CD14-positive monocyte (primary cell): ENCODE measurements at regions of chr1 and their contacts with region 1.

Region 1: DNA sequence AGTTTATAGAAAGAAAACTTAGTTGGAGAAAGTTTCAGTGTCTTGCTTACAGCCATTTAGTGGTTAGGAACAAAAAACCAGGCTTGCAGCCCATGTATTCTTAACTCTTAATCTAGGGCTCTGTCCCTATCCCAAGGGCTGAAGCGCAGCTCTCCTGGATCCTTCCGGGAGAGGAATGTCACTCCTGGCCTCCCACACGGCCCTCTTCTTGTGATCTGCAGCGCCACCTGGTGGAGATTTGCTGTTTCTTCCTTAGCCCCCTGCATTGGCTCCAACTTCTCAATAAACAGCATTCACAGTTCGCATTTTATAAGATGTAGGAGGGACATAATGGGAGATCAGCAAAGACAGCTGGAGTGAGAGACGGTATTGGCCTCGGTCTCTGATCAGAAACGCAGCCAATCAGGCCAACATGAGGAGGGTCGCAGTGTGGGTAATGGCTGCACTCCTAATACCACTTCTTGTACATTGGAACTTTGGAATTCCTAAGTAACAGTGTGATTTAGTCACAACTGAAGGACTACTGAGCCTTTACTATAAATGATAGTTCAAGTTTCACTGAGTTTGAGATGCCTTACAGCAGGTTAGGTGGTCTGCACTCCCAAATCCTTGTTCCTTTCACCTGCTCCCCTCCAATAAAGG is 283.4 kb downstream of the ASTN1 start:
- DNase-seq: peak; percentile 3 to 31 (median 11)
- H3K4me3 ChIP-seq: no peak overlapping the region
- H3K4me3 Mint-ChIP-seq: no peak overlapping the region
- H3K27ac ChIP-seq: no peak overlapping the region
- H3K27ac Mint-ChIP-seq: peak overlapping the region in 1 of 7 donors; percentile 62
- H3K4me1 ChIP-seq: no peaks in the 10 kb centered on the region
- H3K4me1 Mint-ChIP-seq: no peaks in the 10 kb centered on the region
- H3K27me3 ChIP-seq: no peaks in the 10 kb centered on the region
- H3K27me3 Mint-ChIP-seq: peaks cover 1 to 2% (median 2%) of the 10 kb centered on the region in 3 donors
- CTCF ChIP-seq: peak; percentile 91

Region 2: GRCh38 chr1:176374967-176375569 is 506.0 kb before region 1 on chr1:
- intact Hi-C with region 1: loop called in 1 of 2 experiments (anchors 10 kb)
- DNase-seq: peak; percentile 8 to 30 (median 25)
- H3K4me3 ChIP-seq: no peak overlapping the region
- H3K4me3 Mint-ChIP-seq: no peak overlapping the region
- H3K27ac ChIP-seq: no peak overlapping the region
- H3K27ac Mint-ChIP-seq: no peak overlapping the region
- H3K4me1 ChIP-seq: no peaks in the 10 kb centered on the region
- H3K4me1 Mint-ChIP-seq: no peaks in the 10 kb centered on the region
- H3K27me3 ChIP-seq: no peaks in the 10 kb centered on the region
- H3K27me3 Mint-ChIP-seq: peaks cover 0 to 5% (median 2%) of the 10 kb centered on the region in 3 donors
- CTCF ChIP-seq: peak; percentile 88

Region 3: GRCh38 chr1:176559878-176560277 is 321.2 kb before region 1 on chr1:
- intact Hi-C with region 1: loop called in 1 of 2 experiments (anchors 5 kb)
- DNase-seq: peak in 2 of 3 donors; percentile 0 to 6
- H3K4me3 ChIP-seq: no peak overlapping the region
- H3K4me3 Mint-ChIP-seq: no peak overlapping the region
- H3K27ac ChIP-seq: no peak overlapping the region
- H3K27ac Mint-ChIP-seq: no peak overlapping the region
- H3K4me1 ChIP-seq: no peaks in the 10 kb centered on the region
- H3K4me1 Mint-ChIP-seq: no peaks in the 10 kb centered on the region
- H3K27me3 ChIP-seq: no peaks in the 10 kb centered on the region
- H3K27me3 Mint-ChIP-seq: peaks cover 0 to 6% (median 3%) of the 10 kb centered on the region in 3 donors
- CTCF ChIP-seq: peak; percentile 66

Region 4: GRCh38 chr1:176701151-176701866 is 179.8 kb before region 1 on chr1:
- intact Hi-C with region 1: no loop called
- DNase-seq: no peak
- H3K4me3 ChIP-seq: no peak overlapping the region
- H3K4me3 Mint-ChIP-seq: no peak overlapping the region
- H3K27ac ChIP-seq: no peak overlapping the region
- H3K27ac Mint-ChIP-seq: no peak overlapping the region
- H3K4me1 ChIP-seq: no peaks in the 10 kb centered on the region
- H3K4me1 Mint-ChIP-seq: no peaks in the 10 kb centered on the region
- H3K27me3 ChIP-seq: no peaks in the 10 kb centered on the region
- H3K27me3 Mint-ChIP-seq: peaks cover 1 to 2% (median 2%) of the 10 kb centered on the region in 3 donors
- CTCF ChIP-seq: no peak

Region 5: DNA sequence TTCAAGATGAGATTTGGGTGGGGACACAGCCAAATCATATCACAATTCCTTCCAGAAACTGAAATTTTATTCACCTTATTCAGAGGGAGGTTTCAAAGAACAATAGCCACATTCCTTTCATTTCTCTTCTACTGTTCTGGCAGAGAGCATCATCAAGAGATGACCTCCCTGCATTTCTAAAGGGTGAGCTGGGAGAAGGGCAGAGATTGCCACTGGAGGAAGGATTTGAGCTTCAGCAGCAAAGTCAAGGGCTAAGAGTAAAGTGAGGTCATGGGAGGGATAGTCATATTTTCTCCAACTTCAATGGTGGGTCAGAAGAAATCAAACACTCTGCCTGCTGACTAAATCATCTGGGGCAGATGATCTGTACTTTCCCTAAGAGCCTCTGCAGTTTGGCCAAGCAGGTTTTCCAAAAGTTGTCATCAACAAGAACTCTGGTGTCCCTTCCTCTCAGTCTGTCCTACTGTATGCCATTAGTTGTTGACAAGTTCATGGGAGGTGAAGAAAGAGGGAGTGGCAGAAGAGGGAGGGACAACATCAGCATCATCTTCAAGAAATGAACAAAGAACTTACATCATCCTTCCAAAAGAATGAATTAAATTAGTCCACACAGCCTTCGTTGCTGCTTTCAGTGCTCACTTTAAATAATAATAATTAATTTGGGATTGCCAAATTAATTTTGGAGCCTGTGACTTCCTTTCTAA is 14.9 kb before region 1 on chr1:
- intact Hi-C with region 1: no loop called
- DNase-seq: no peak
- H3K4me3 ChIP-seq: no peak overlapping the region
- H3K4me3 Mint-ChIP-seq: no peak overlapping the region
- H3K27ac ChIP-seq: no peak overlapping the region
- H3K27ac Mint-ChIP-seq: no peak overlapping the region
- H3K4me1 ChIP-seq: no peaks in the 10 kb centered on the region
- H3K4me1 Mint-ChIP-seq: no peaks in the 10 kb centered on the region
- H3K27me3 ChIP-seq: no peaks in the 10 kb centered on the region
- H3K27me3 Mint-ChIP-seq: peaks cover 0 to 2% (median 0%) of the 10 kb centered on the region in 3 donors
- CTCF ChIP-seq: no peak

Region 6: GRCh38 chr1:176996456-176997090 is 115.5 kb after region 1 on chr1:
- intact Hi-C with region 1: no loop called
- DNase-seq: no peak
- H3K4me3 ChIP-seq: no peak overlapping the region
- H3K4me3 Mint-ChIP-seq: no peak overlapping the region
- H3K27ac ChIP-seq: no peak overlapping the region
- H3K27ac Mint-ChIP-seq: no peak overlapping the region
- H3K4me1 ChIP-seq: no peaks in the 10 kb centered on the region
- H3K4me1 Mint-ChIP-seq: no peaks in the 10 kb centered on the region
- H3K27me3 ChIP-seq: no peaks in the 10 kb centered on the region
- H3K27me3 Mint-ChIP-seq: no peaks in the 10 kb centered on the region
- CTCF ChIP-seq: no peak